ENCODE measurements at regions of chr2 and their contacts with region 1.

Region 1: DNA sequence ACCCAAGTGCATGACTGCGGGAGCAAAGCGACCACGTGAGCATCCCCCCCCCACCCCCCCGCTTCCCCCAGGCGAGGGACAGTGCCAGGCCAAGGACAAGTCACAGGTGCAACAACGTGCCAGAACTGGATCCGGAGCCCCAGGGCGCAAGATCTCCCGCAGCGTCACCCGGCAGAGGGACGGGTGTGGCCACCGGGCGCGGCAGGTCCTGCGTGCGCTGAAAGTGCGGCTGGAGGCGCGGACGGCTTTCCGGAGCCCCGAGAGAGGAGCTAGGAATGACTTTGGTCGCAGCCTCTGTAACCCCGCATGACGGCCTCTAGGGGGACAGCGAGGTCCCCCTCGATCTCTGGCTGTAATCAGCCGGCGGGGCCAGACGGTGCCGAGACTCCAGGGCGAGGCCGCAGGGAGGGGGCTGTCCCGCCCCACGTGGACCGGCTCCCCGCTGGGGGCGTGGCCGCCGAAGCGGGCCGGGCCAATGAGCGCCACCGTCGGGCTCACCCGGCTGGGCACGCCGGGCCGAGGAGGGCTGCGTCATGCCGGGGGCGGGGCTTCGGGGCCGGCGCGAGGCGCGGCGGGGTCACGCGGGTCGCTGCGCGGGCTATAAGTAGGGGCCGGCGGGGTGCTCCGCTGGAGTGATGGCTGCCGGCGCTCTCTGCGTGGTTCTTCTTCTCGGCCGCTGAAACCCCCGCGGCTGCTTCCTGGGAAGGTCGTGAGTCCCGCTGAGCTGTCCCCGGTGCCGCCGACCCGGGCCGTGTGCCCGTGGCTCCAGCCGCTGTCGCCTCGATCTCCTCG is at the start of gene SLC20A1:
- DNase-seq: peak; percentile 90 to 98
- H3K4me3 ChIP-seq: peak within 1 kb of the TSS; percentile 80 to 99 (median 93)
- H3K27ac ChIP-seq: peak within 1 kb of the TSS; percentile 98
- H3K4me1 ChIP-seq: peaks cover 3 to 12% (median 7%) of the 10 kb centered on the region in 4 experiments; a peak in 5 of 7 replicates
- H3K27me3 ChIP-seq: peaks cover 0 to 5% (median 0%) of the 10 kb centered on the region in 4 experiments; a peak in 3 of 7 replicates
- CTCF ChIP-seq: peak; percentile 55 to 75 (median 70)
- EP300 ChIP-seq: peak in 1 of 2 experiments; percentile 84; a peak in 1 of 3 replicates
- POLR2A ChIP-seq: peak; percentile 97
- RAD21 ChIP-seq: peak; percentile 35 to 52
- total RNA-seq, gene SLC20A1: 105 and 106 TPM in 2 replicates

Region 2: GRCh38 chr2:112658820-112659667 is 13.5 kb after region 1 on chr2:
- CTCF ChIA-PET with region 1: interaction called, 6 read pairs
- POLR2A ChIA-PET with region 1: interaction called, 146 read pairs
- DNase-seq: no peak
- H3K4me3 ChIP-seq: no peak overlapping the region
- H3K27ac ChIP-seq: no peak overlapping the region
- H3K4me1 ChIP-seq: no peaks in the 10 kb centered on the region
- H3K27me3 ChIP-seq: no peaks in the 10 kb centered on the region
- CTCF ChIP-seq: no peak
- EP300 ChIP-seq: no peak
- POLR2A ChIP-seq: no peak
- RAD21 ChIP-seq: no peak

Region 3: GRCh38 chr2:112666764-112667122 is 21.2 kb after region 1 on chr2:
- CTCF ChIA-PET with region 1: interaction called, 4 read pairs
- POLR2A ChIA-PET with region 1: interaction called, 146 read pairs
- DNase-seq: no peak
- H3K4me3 ChIP-seq: no peak overlapping the region
- H3K27ac ChIP-seq: no peak overlapping the region
- H3K4me1 ChIP-seq: no peaks in the 10 kb centered on the region
- H3K27me3 ChIP-seq: no peaks in the 10 kb centered on the region
- CTCF ChIP-seq: no peak
- EP300 ChIP-seq: no peak
- POLR2A ChIP-seq: no peak
- RAD21 ChIP-seq: no peak

Region 4: DNA sequence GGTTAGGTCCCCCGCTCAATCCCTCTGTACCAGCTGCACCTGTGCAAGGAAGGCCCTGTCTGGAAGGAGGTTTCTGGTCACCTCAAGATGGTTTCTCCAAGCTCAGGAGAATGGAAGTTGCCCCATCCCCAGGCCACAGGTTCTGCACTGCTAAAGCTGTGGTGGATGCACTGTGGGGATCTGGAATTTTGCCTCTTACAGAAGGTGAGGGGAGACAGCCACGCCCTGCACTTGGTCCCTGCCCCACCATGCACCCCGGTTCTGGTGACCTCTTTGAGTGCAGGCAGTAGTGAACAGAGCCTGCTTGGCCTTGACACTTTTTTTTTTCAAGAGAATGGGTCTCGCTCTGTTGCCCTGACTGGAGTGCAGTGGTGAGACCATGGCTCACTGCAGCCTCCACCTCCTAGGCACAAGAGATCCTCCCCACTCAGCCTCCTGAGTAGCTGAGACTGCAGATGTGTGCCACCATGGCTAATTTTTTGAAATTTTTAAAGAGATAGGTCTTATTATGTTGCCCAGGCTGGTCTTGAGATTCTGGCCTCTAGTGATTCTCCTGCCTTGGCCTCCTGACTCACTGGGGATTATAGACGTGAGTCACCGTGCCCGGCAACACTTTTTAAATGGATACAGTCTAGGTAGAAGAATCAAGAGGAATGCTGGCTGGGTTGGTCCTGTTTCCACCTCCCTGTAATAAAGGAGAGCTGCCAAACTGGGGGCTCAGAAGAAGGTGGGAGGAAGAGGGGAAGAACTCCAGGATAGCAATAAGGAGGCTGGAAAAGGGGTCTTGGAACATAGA is 69.5 kb after region 1 on chr2:
- CTCF ChIA-PET with region 1: no interaction called
- POLR2A ChIA-PET with region 1: no interaction called
- DNase-seq: no peak
- H3K4me3 ChIP-seq: no peak overlapping the region
- H3K27ac ChIP-seq: no peak overlapping the region
- H3K4me1 ChIP-seq: no peaks in the 10 kb centered on the region; a peak in 1 of 7 replicates
- H3K27me3 ChIP-seq: no peaks in the 10 kb centered on the region
- CTCF ChIP-seq: no peak
- EP300 ChIP-seq: no peak
- POLR2A ChIP-seq: no peak
- RAD21 ChIP-seq: no peak